IMR-90 (cell line): ENCODE measurements at regions of chr21 and their contacts with region 1.

Region 1: DNA sequence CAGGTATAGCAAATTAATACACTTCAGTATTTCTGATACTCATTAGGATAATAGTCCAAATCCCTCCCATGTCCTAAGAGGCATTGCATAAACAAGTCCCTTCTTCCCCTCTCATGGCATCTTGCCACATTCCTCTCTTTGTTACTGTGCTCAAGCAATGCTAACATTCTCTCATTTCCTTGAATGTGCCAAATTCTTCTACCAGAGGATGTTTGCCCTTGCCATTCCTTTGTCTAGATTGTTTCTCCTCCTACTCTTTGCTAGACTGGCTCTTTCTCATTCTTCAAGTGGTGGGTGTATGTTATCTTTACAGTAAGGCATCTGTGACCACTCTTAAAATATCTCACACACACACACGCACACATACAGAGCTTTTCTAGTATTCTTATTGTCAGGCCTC is 621.0 kb upstream of the CXADR start:
- DNase-seq: peak; percentile 60
- ATAC-seq: peak; percentile 86
- H3K4me3 ChIP-seq: no peak overlapping the region
- H3K27ac ChIP-seq: no peak overlapping the region
- H3K4me1 ChIP-seq: no peaks in the 10 kb centered on the region
- H3K27me3 ChIP-seq: no peaks in the 10 kb centered on the region
- CTCF ChIP-seq: no peak
- POLR2A ChIP-seq: no peak
- RAD21 ChIP-seq: no peak

Region 2: GRCh38 chr21:16821588-16821987 is 70.2 kb before region 1 on chr21:
- CTCF ChIA-PET with region 1: no interaction called
- POLR2A ChIA-PET with region 1: no interaction called
- dilution Hi-C with region 1: no loop called
- in situ Hi-C with region 1: no loop called
- intact Hi-C with region 1: loop called (anchors 10 kb)
- DNase-seq: no peak
- ATAC-seq: peak; percentile 56; the same call in 1 of the 2 replicates
- H3K4me3 ChIP-seq: no peak overlapping the region
- H3K27ac ChIP-seq: no peak overlapping the region
- H3K4me1 ChIP-seq: no peaks in the 10 kb centered on the region
- H3K27me3 ChIP-seq: no peaks in the 10 kb centered on the region
- CTCF ChIP-seq: no peak
- POLR2A ChIP-seq: no peak
- RAD21 ChIP-seq: no peak